CD14-positive monocyte (primary cell): ENCODE measurements at regions of chr22 and their contacts with region 1.

Region 1: DNA sequence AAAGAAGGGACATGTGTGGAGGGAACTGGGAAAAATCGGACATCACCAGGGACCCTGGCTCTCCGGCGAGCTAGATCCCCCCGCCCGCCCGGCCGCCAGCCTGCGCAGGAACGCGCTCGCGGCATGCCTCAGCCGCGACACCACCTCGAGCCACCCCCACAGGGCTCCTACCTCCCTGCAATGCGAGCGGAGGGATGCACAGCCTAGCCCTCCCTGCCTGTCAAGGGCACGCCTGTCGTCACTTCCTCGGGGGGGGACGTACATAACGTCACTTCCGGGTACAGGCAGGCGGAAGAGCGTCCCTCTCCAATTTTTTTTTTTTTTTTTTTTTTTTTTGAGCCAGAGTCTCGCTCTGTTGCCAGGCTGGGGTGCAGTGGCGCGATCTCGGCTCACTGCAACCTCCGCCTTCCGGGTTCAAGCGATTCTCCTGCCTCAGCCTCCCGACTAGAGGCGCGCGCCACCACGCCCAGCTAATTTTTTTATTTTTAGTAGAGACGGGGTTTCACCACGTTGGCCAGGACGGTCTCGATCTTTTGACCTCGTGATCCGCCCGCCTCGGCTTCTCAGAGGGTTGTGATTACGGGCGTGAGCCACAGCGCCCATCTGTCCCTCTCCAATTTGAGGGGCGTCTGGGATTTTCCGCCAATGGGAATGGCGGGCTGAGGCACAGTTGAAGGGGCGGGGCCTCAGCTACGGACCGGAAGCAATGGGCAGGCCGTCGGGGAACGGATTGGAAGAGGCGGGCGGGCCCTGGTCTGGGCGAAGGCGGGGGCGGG is at the start of gene TXN2:
- DNase-seq: peak; percentile 94 to 96 (median 95)
- H3K4me3 ChIP-seq: peak within 1 kb of the TSS; percentile 79 to 88 (median 84)
- H3K4me3 Mint-ChIP-seq: peak within 1 kb of the TSS; percentile 87 to 93
- H3K27ac ChIP-seq: peak within 1 kb of the TSS; percentile 94 to 96
- H3K27ac Mint-ChIP-seq: peak within 1 kb of the TSS; percentile 98 to 100 (median 99)
- H3K4me1 ChIP-seq: peaks cover 14 to 20% of the 10 kb centered on the region in 2 donors
- H3K4me1 Mint-ChIP-seq: peaks cover 10% of the 10 kb centered on the region
- H3K27me3 ChIP-seq: no peaks in the 10 kb centered on the region
- H3K27me3 Mint-ChIP-seq: peaks cover 0 to 3% (median 0%) of the 10 kb centered on the region in 3 donors
- CTCF ChIP-seq: no peak
- polyA plus RNA-seq, gene TXN2: 79.8 to 141 (median 140) TPM

Region 2: GRCh38 chr22:36528795-36529751 is 47.5 kb after region 1 on chr22 and contains the start of gene EIF3D:
- intact Hi-C with region 1: loop called in 1 of 2 experiments (anchors 1 kb)
- DNase-seq: peak; percentile 100
- H3K4me3 ChIP-seq: peak within 1 kb of the TSS; percentile 70 to 88 (median 75)
- H3K4me3 Mint-ChIP-seq: peak within 1 kb of the TSS; percentile 90 to 91
- H3K27ac ChIP-seq: peak within 1 kb of the TSS; percentile 90 to 96
- H3K27ac Mint-ChIP-seq: peak within 1 kb of the TSS; percentile 95 to 99 (median 98)
- H3K4me1 ChIP-seq: peaks cover 16 to 27% of the 10 kb centered on the region in 2 donors
- H3K4me1 Mint-ChIP-seq: peaks cover 20% of the 10 kb centered on the region
- H3K27me3 ChIP-seq: no peaks in the 10 kb centered on the region
- H3K27me3 Mint-ChIP-seq: peaks cover 2 to 5% (median 5%) of the 10 kb centered on the region in 3 donors
- CTCF ChIP-seq: no peak
- polyA plus RNA-seq, gene EIF3D: 102 to 244 (median 122) TPM